MCF 10A (cell line): ENCODE measurements at regions of chr1 and their contacts with region 1.

Region 1: GRCh38 chr1:169348383-169349036 is 19.1 kb downstream of the NME7 start:
- DNase-seq: peak; percentile 77
- H3K4me3 Mint-ChIP-seq: no peak overlapping the region
- H3K27ac Mint-ChIP-seq: no peak overlapping the region
- H3K4me1 Mint-ChIP-seq: no peaks in the 10 kb centered on the region
- H3K27me3 Mint-ChIP-seq: no peaks in the 10 kb centered on the region
- CTCF ChIP-seq: peak; percentile 84

Region 2: DNA sequence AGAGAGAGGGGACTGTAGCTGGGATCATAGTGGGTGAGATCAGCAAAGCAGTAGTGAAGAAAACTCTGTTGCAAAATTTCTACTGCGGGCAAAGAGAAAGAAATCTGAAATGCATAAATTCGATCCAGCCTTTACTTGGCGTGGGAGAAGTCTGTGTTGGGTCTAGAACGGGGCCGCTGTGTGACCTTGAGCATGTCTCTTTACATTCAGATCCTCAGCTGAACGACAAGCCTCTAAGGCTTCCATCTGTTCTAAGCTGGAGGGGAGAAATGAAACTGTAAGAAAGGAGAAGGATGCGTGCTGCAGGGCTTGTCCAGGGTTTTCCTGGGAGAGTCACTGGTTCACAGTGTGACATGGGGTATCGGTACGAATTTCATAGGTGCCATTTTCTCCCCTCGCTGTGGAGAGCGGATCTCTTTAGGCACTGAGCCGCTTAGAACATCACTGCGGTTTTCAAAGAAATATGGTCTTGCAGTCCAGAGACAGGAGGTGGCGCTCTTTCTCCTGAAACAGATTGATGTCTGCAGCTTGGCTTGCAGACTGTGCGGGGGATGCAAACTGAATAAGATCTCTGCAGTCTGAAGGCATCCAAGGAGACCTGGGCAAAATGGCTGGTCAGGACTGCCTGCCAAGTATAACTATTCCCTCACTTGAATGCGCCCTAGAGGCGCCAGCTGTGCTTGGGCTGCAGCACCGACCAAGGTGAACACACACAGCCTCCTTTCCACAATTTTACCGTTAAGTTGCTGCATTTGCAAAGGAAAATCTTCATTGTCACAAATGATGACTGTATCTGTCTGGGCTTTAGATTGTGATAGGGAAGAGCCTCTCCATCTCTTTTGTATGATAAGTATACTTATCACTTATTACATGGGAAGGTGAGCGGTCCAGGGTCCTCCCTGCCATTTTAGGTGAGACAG is 908.8 kb before region 1 on chr1:
- CTCF ChIA-PET with region 1: interaction called, 11 read pairs
- POLR2A ChIA-PET with region 1: no interaction called
- intact Hi-C with region 1: loop called (anchors 2 kb)
- DNase-seq: peak; percentile 91
- H3K4me3 Mint-ChIP-seq: no peak overlapping the region
- H3K27ac Mint-ChIP-seq: no peak overlapping the region
- H3K4me1 Mint-ChIP-seq: peaks cover 22% of the 10 kb centered on the region
- H3K27me3 Mint-ChIP-seq: peaks cover 4% of the 10 kb centered on the region
- CTCF ChIP-seq: peak; percentile 91

Region 3: GRCh38 chr1:168623003-168623828 is 725.3 kb before region 1 on chr1:
- CTCF ChIA-PET with region 1: interaction called, 19 read pairs
- POLR2A ChIA-PET with region 1: interaction called, 4 read pairs
- intact Hi-C with region 1: no loop called
- DNase-seq: peak; percentile 91
- H3K4me3 Mint-ChIP-seq: no peak overlapping the region
- H3K27ac Mint-ChIP-seq: no peak overlapping the region
- H3K4me1 Mint-ChIP-seq: peaks cover 7% of the 10 kb centered on the region
- H3K27me3 Mint-ChIP-seq: no peaks in the 10 kb centered on the region
- CTCF ChIP-seq: no peak

Region 4: DNA sequence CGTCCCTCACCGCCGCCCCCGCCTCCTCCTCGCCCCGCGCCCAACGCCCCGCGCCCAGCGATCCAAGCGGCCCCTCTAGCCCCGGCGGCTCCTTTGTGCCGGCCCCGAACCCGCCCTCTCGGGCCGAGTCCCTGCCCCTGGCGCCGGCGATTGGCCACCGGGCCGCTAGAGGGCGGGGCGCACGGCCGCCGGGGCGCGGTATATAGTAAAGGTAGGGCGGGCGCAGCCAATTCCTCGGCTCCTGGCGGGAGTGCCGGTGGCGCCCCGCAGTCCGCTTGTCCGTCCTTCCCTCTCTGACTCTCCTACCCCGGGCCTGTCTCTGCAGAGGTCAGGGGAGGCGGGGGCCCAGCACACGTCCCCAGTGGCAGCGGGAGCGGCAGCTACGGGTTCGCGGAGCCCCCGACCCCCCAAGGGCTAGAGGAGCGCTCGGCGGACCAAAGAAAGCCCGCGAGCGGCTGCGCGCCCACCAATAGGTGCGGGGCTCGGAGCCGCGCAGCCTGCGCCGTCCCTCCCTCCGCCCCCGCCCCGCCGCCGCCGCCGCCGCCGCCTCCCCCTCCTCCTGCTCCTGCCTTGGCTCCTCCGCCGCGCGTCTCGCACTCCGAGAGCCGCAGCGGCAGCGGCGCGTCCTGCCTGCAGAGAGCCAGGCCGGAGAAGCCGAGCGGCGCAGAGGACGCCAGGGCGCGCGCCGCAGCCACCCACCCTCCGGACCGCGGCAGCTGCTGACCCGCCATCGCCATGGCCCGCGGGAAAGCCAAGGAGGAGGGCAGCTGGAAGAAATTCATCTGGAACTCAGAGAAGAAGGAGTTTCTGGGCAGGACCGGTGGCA is 242.2 kb before region 1 on chr1 and contains the start of gene ATP1B1:
- CTCF ChIA-PET with region 1: interaction called, 42 read pairs
- POLR2A ChIA-PET with region 1: interaction called, 7 read pairs
- intact Hi-C with region 1: loop called (anchors 2 kb)
- DNase-seq: peak; percentile 92
- H3K4me3 Mint-ChIP-seq: peak within 1 kb of the TSS; percentile 80
- H3K27ac Mint-ChIP-seq: peak within 1 kb of the TSS; percentile 96
- H3K4me1 Mint-ChIP-seq: peaks cover 49% of the 10 kb centered on the region
- H3K27me3 Mint-ChIP-seq: no peaks in the 10 kb centered on the region
- CTCF ChIP-seq: peak; percentile 60
- total RNA-seq, gene ATP1B1: 20.0 and 24.4 TPM in 2 replicates

Region 5: GRCh38 chr1:169133801-169134502 is 214.6 kb before region 1 on chr1:
- CTCF ChIA-PET with region 1: interaction called, 10 read pairs
- POLR2A ChIA-PET with region 1: no interaction called
- intact Hi-C with region 1: no loop called
- DNase-seq: peak; percentile 32
- H3K4me3 Mint-ChIP-seq: no peak overlapping the region
- H3K27ac Mint-ChIP-seq: no peak overlapping the region
- H3K4me1 Mint-ChIP-seq: peaks cover 24% of the 10 kb centered on the region
- H3K27me3 Mint-ChIP-seq: no peaks in the 10 kb centered on the region
- CTCF ChIP-seq: peak; percentile 35

Region 6: GRCh38 chr1:169367486-169368405 is 19.2 kb after region 1 on chr1 and contains the starts of genes BLZF1 and NME7:
- CTCF ChIA-PET with region 1: interaction called, 16 read pairs
- POLR2A ChIA-PET with region 1: interaction called, 4 read pairs
- intact Hi-C with region 1: no loop called
- DNase-seq: peak; percentile 99
- H3K4me3 Mint-ChIP-seq: no peak within 1 kb of the TSS
- H3K27ac Mint-ChIP-seq: no peak within 1 kb of the TSS
- H3K4me1 Mint-ChIP-seq: peaks cover 24% of the 10 kb centered on the region
- H3K27me3 Mint-ChIP-seq: no peaks in the 10 kb centered on the region
- CTCF ChIP-seq: no peak
- total RNA-seq, gene BLZF1: 57.8 and 66.1 TPM in 2 replicates
- total RNA-seq, gene NME7: 36.5 and 46.8 TPM in 2 replicates